Heart right ventricle (tissue), 16 donors: ENCODE measurements at regions of chr17 and their contacts with region 1.

Region 1: DNA sequence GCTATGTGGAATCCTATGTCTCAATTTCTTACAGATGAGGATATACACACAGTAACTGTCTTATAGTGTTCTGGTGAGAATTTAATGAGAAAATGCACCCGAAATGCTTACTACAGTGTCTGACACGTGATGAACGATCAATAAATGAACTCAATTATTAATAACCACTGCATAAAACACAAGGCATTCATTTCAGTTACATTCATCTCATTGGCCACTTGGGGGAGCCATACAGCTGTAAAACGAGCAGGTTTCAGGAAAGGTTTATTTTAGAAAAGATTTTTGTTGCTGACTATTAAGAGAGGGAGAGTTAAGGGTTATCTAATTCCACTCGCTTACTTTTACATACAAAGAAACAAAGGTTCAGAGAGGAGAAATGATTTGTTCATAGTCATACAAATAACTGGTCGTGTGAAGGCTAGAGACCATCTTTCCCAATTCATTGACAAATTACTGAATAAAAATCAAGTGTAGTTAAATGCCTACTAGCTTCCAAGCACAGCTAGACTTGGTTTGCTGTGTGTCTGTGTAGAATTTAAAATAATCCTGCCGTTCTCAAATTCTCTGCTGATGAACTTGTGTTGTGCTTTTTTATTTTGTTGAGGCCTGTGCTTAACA is 160.1 kb downstream of the MAP2K4 start:
- DNase-seq: peak in 1 of 2 donors; percentile 36
- ATAC-seq: peak in 2 of 8 donors; percentile 31 to 56
- H3K4me3 ChIP-seq: no peak overlapping the region
- H3K27ac ChIP-seq: no peak overlapping the region
- H3K4me1 ChIP-seq: no peaks in the 10 kb centered on the region
- H3K27me3 ChIP-seq: no peaks in the 10 kb centered on the region
- CTCF ChIP-seq: peak; percentile 48 to 79 (median 73)

Region 2: DNA sequence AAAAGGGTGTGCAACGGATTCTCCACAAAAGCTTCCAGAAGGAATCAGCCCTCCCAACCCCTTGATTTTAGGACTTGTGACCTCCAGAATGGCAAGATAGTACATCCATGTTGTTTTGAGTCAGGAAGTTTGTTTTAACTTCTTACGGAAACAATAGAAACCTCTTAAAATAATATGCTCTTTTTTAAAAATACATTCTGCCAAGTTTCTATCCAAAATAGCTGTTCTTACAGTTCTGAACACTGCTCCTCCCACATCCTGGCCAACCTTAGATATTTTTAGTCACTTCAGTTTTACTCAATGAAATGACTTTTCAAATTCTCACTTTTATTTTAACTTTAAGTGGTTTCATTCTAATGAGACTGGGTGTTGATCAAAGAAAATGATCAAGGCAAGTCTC is 339.9 kb before region 1 on chr17:
- intact Hi-C with region 1: no loop called
- DNase-seq: no peak
- ATAC-seq: no peak
- H3K4me3 ChIP-seq: no peak overlapping the region
- H3K27ac ChIP-seq: peak overlapping the region in 3 of 10 donors; percentile 17 to 47 (median 40)
- H3K4me1 ChIP-seq: peaks cover 0 to 19% (median 5%) of the 10 kb centered on the region in 9 donors
- H3K27me3 ChIP-seq: no peaks in the 10 kb centered on the region
- CTCF ChIP-seq: no peak

Region 3: GRCh38 chr17:12536472-12536871 is 355.7 kb after region 1 on chr17:
- intact Hi-C with region 1: loop called in 1 of 10 experiments (anchors 10 kb)
- DNase-seq: no peak
- ATAC-seq: no peak
- H3K4me3 ChIP-seq: no peak overlapping the region
- H3K27ac ChIP-seq: no peak overlapping the region
- H3K4me1 ChIP-seq: no peaks in the 10 kb centered on the region
- H3K27me3 ChIP-seq: no peaks in the 10 kb centered on the region
- CTCF ChIP-seq: no peak

Region 4: DNA sequence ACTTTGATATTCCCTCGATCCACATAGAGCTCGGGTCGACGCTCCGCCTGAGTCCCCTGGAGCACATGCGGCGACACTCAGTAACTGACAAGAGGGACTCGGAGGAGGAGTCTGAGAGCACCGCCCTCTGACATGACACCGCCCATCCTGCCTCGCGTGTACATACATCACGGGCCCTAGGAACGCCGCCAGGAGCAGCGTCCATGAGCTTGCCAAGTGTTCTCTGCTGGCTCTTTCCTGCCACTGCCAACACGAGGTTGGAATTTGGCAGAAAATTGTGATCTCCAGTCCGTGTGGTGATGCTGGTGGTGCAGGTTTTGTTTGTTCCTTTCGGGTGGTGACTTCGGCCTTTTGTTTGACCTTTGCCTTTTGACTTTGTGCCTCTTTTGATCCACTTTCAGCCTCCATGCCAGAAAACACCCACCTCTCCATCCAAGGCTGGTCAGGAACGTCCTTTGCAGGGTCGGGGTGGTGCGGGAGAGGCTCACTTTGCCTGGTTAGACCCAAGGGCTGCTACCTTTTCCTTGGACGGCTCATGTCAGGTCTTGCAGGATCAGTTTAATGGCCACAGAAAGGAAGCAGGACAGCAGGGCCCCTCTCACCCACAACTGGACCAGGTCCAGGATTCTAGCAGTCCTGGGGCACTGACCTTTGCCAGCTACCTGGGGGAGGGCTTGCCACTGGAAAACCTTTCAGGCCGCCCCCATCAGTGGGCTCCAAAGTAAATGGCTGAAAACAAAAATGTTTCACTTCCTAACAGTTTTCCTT is 809.5 kb after region 1 on chr17:
- intact Hi-C with region 1: loop called in 1 of 10 experiments (anchors 10 kb)
- DNase-seq: peak; percentile 72 to 79
- ATAC-seq: peak; percentile 47 to 87 (median 80)
- H3K4me3 ChIP-seq: no peak overlapping the region
- H3K27ac ChIP-seq: peak overlapping the region in 7 of 10 donors; percentile 14 to 69 (median 49)
- H3K4me1 ChIP-seq: peaks cover 5 to 43% (median 23%) of the 10 kb centered on the region in 9 donors
- H3K27me3 ChIP-seq: no peaks in the 10 kb centered on the region
- CTCF ChIP-seq: no peak

Region 5: DNA sequence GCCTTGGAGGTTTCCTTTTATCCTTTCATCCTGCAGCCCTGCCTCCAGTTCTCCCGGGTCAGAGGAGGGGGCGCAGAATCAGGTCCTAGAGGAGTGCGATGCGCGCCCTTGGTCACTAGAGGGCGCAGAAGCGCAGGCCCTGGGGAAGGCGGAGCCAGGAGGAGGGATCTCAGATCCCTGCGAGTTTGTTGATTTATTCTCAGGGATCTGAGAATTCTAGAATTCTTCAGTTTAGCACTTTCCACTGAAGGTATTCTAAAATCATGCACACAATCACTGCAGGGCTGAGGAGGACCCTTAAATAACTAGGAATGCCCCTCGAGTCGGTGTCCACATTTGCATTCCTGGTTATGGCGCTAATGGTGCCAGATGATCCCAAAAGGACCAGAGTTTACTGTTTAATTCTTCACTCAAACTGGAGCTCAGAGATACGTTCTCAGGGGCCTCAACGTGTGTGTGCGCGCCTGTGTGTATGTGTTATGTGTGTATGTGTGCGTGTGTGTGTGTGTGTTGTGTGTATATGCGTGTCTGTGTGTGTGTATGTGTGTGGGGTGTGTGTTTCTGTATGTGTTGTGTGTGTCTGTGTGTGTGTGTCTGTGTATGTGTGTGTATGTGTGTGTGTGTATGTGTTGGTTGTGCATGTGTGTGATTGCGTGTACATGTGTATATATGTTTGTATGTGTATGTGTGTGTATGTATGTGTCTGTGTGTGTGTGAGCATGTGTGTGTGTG is 843.9 kb after region 1 on chr17:
- intact Hi-C with region 1: loop called in 1 of 10 experiments (anchors 10 kb)
- DNase-seq: peak; percentile 32 to 62
- ATAC-seq: peak; percentile 74 to 92 (median 86)
- H3K4me3 ChIP-seq: peak overlapping the region in 4 of 10 donors; percentile 16 to 29 (median 24)
- H3K27ac ChIP-seq: no peak overlapping the region
- H3K4me1 ChIP-seq: peaks cover 0 to 8% (median 3%) of the 10 kb centered on the region in 9 donors
- H3K27me3 ChIP-seq: peaks cover 0 to 4% (median 0%) of the 10 kb centered on the region in 7 donors
- CTCF ChIP-seq: peak; percentile 83 to 99 (median 95)